CD8-positive, alpha-beta T cell (primary cell): ENCODE measurements at regions of chr3 and their contacts with region 1.

Region 1: DNA sequence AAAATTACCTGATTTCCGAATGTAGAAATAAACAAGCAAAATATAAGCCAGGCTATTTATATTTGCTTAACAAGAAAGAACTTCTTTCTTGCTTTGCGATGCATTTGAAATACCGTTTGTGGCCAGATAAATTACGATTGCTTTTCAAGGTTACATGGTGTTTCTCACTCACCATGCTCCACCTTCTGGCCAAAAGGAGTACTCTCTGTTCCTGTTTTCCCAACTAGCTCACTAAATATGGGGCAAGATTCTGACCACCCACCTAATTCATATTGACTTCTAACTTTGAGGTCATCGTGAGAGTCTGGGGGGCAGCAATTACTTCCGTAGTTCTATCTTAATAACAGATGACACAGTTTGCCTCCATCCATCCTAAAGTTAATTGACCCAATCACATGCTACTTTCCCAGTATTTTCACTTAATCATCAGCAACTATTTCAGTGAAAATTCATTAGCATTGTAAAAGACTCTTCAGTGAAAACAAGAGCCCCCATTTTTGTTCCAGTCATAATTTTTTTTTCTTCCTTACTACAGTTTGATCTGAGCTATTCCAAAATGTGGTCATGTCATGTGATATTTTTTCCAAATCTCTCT is 25.9 kb downstream of the ACP3 start:
- DNase-seq: peak in 3 of 9 experiments; percentile 13 to 56 (median 47)
- ATAC-seq: no peak
- H3K4me3 ChIP-seq: no peak overlapping the region
- H3K4me3 Mint-ChIP-seq: no peak overlapping the region
- H3K27ac ChIP-seq: no peak overlapping the region
- H3K27ac Mint-ChIP-seq: no peak overlapping the region
- H3K4me1 ChIP-seq: no peaks in the 10 kb centered on the region
- H3K4me1 Mint-ChIP-seq: no peaks in the 10 kb centered on the region
- H3K27me3 ChIP-seq: peaks cover 0 to 3% of the 10 kb centered on the region in 2 experiments
- H3K27me3 Mint-ChIP-seq: peaks cover 7% of the 10 kb centered on the region
- CTCF ChIP-seq: peak; percentile 62

Region 2: DNA sequence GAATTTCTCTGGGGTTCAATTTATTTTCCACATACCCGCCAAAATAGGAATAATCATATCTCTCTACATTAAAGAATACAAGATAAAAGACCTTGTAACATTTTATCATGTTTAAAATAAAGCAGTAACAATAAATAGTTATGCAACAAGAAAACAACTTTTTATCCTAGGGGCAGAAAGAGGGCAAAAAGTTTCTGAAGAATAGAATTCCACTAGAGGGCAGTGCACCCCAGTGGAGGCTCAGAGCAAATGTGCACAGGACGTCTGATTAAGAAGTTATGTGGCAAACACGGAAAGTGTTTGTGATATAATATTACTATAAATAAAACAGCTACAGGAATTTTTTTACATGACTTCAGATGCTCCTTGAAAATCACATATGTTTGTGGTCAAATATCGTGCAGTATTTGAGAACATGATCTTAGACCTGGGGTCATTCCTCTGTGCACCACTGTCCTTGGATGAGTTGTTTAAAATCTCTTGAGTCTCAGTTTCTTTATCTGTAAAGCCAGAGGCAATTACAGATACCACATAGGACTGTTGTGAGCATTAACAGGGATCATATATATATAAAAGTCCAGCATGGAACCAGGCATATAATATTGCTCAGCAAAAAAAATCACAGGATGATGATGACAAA is 1583.3 kb before region 1 on chr3:
- CTCF ChIA-PET with region 1: no interaction called
- POLR2A ChIA-PET with region 1: no interaction called
- intact Hi-C with region 1: loop called in 1 of 2 experiments (anchors 10 kb)
- DNase-seq: peak in 8 of 9 experiments; percentile 16 to 72 (median 54)
- ATAC-seq: peak; percentile 66
- H3K4me3 ChIP-seq: no peak overlapping the region
- H3K4me3 Mint-ChIP-seq: no peak overlapping the region
- H3K27ac ChIP-seq: no peak overlapping the region
- H3K27ac Mint-ChIP-seq: no peak overlapping the region
- H3K4me1 ChIP-seq: no peaks in the 10 kb centered on the region
- H3K4me1 Mint-ChIP-seq: no peaks in the 10 kb centered on the region
- H3K27me3 ChIP-seq: no peaks in the 10 kb centered on the region
- H3K27me3 Mint-ChIP-seq: peaks cover 7% of the 10 kb centered on the region
- CTCF ChIP-seq: peak; percentile 93